ENCODE measurements at regions of chr17 and their contacts with region 1.

Region 1: GRCh38 chr17:74368092-74369081 is 1.1 kb downstream of the GPR142 start:
- DNase-seq: peak; percentile 78
- ATAC-seq: peak; percentile 77
- H3K4me3 Mint-ChIP-seq: no peak overlapping the region
- H3K27ac Mint-ChIP-seq: no peak overlapping the region
- H3K4me1 Mint-ChIP-seq: peaks cover 15% of the 10 kb centered on the region
- H3K27me3 Mint-ChIP-seq: peaks cover 7% of the 10 kb centered on the region

Region 2: GRCh38 chr17:74150428-74151025 is 217.9 kb before region 1 on chr17:
- CTCF ChIA-PET with region 1: no interaction called
- POLR2A ChIA-PET with region 1: no interaction called
- DNase-seq: no peak
- ATAC-seq: no peak
- H3K4me3 Mint-ChIP-seq: no peak overlapping the region
- H3K27ac Mint-ChIP-seq: no peak overlapping the region
- H3K4me1 Mint-ChIP-seq: no peaks in the 10 kb centered on the region
- H3K27me3 Mint-ChIP-seq: peaks cover 4% of the 10 kb centered on the region

Region 3: DNA sequence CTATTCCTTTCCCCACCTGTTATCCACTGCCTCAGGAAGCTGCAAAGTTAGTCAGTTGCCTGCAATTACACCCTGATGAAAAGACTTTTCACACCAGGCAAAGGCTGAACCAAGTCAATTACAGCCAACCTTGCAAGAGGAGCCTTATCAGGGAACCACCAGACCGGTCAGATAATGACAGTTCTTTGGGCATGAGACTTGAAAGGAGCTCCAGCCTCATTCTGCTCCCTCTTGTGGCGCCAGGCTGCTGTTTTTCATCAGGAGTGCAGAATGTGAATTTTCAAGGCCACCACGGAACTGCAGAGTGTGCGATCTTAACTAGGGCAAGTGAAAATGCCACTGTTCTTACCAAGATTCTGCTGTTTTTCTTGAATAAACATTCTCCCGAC is 71.8 kb before region 1 on chr17:
- CTCF ChIA-PET with region 1: interaction called, 11 read pairs
- POLR2A ChIA-PET with region 1: no interaction called
- DNase-seq: peak; percentile 59
- ATAC-seq: peak; percentile 60
- H3K4me3 Mint-ChIP-seq: no peak overlapping the region
- H3K27ac Mint-ChIP-seq: no peak overlapping the region
- H3K4me1 Mint-ChIP-seq: peaks cover 10% of the 10 kb centered on the region
- H3K27me3 Mint-ChIP-seq: peaks cover 16% of the 10 kb centered on the region

Region 4: GRCh38 chr17:74356646-74357465 is 11.5 kb before region 1 on chr17:
- CTCF ChIA-PET with region 1: interaction called, 20 read pairs
- POLR2A ChIA-PET with region 1: no interaction called
- DNase-seq: peak; percentile 38
- ATAC-seq: peak; percentile 33
- H3K4me3 Mint-ChIP-seq: no peak overlapping the region
- H3K27ac Mint-ChIP-seq: no peak overlapping the region
- H3K4me1 Mint-ChIP-seq: peaks cover 2% of the 10 kb centered on the region
- H3K27me3 Mint-ChIP-seq: peaks cover 51% of the 10 kb centered on the region

Region 5: DNA sequence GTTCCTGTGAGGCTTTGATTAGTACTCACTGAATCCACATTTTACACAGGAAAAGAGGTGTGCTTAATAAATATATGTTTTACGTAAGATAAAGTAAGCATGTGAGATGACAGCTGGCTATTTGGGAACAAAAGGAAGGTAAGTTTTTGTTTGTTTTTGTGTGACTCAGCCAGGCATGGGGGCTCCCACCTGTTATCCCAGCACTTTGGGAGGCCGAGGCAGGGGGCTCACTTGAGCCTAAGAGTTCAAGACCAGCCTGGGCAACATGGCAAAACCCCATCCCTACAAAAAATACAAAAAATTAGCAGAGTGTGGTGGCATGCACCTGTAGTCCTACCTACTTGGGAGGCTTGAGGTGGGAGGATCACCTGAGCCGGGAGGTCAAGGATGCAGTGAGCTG is 16.8 kb after region 1 on chr17:
- CTCF ChIA-PET with region 1: interaction called, 58 read pairs
- POLR2A ChIA-PET with region 1: no interaction called
- DNase-seq: no peak
- ATAC-seq: no peak
- H3K4me3 Mint-ChIP-seq: no peak overlapping the region
- H3K27ac Mint-ChIP-seq: no peak overlapping the region
- H3K4me1 Mint-ChIP-seq: peaks cover 4% of the 10 kb centered on the region
- H3K27me3 Mint-ChIP-seq: peaks cover 5% of the 10 kb centered on the region

Region 6: GRCh38 chr17:74457146-74457819 is 88.9 kb after region 1 on chr17:
- CTCF ChIA-PET with region 1: interaction called, 46 read pairs
- POLR2A ChIA-PET with region 1: no interaction called
- DNase-seq: peak; percentile 77
- ATAC-seq: peak; percentile 41
- H3K4me3 Mint-ChIP-seq: no peak overlapping the region
- H3K27ac Mint-ChIP-seq: no peak overlapping the region
- H3K4me1 Mint-ChIP-seq: peaks cover 33% of the 10 kb centered on the region
- H3K27me3 Mint-ChIP-seq: peaks cover 25% of the 10 kb centered on the region

Region 7: DNA sequence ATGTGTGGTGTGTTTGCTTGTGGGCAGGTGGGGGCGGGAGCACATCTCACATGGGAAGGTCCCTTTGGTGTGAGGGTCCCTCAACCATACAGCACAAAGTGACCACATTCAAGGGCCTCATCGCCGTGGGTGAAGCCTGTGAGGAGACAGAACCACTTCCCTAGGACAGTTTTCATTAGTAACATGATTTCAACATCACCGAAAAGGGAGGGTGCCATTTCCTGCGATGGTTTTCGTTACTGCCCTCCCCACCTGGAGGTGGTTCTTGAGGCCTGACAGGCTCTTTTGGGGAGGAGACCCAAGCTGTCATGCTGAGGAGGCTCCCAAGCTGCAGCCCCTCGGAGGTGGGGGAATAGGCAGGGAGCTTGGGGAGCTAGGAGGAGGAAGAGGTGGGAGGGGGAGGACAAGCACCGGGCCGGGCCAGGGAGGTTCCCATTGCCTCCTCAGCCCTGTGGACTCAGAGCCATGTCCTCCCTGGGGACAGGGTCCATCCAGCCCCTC is 153.4 kb after region 1 on chr17:
- CTCF ChIA-PET with region 1: no interaction called
- POLR2A ChIA-PET with region 1: no interaction called
- DNase-seq: no peak
- ATAC-seq: no peak
- H3K4me3 Mint-ChIP-seq: no peak overlapping the region
- H3K27ac Mint-ChIP-seq: no peak overlapping the region
- H3K4me1 Mint-ChIP-seq: peaks cover 13% of the 10 kb centered on the region
- H3K27me3 Mint-ChIP-seq: peaks cover 25% of the 10 kb centered on the region

Region 8: GRCh38 chr17:74532115-74532514 is 163.7 kb after region 1 on chr17:
- CTCF ChIA-PET with region 1: interaction called, 28 read pairs
- POLR2A ChIA-PET with region 1: no interaction called
- DNase-seq: no peak
- ATAC-seq: no peak
- H3K4me3 Mint-ChIP-seq: no peak overlapping the region
- H3K27ac Mint-ChIP-seq: no peak overlapping the region
- H3K4me1 Mint-ChIP-seq: peaks cover 6% of the 10 kb centered on the region
- H3K27me3 Mint-ChIP-seq: peaks cover 33% of the 10 kb centered on the region